Activated CD4-positive, alpha-beta T cell treated with anti-CD3 and anti-CD28 coated beads for 36 hours (primary cell): ENCODE measurements at regions of chr3 and their contacts with region 1.

Region 1: DNA sequence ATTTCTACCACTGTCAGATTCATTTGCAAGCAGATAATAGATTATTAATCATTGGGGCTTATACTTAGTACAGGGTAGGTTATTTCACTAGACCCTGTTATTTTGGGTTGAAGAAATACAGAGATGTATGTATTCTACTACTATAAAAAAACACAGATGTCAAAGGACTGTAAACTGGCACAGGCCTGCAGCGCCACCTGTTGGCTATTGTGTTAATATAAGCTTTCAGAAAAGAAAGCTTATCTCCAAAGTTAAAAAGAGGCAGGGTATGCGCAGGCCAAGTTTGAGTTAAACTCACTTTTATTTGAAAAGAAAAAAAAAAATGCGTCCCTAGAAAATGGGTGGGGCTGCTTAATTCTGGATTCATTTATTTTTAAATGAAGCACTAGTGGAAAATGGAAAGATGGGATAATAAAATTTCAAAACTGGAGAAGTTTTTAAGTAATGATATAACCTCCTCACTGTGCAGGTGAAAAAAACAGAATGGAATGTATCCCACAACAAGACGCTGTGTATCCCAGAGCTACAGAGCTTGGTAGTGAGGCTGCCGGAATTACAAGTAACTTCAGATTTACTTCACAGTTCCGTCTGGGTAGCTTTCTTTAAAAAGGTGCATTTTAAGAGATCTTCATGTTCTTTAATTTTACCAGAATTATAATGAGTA is 407.2 kb upstream of the TGFBR2 start:
- DNase-seq: peak; percentile 86
- ATAC-seq: peak; percentile 30
- H3K4me3 Mint-ChIP-seq: no peak overlapping the region
- H3K27ac Mint-ChIP-seq: no peak overlapping the region
- H3K4me1 Mint-ChIP-seq: peaks cover 2% of the 10 kb centered on the region
- H3K27me3 Mint-ChIP-seq: no peaks in the 10 kb centered on the region

Region 2: DNA sequence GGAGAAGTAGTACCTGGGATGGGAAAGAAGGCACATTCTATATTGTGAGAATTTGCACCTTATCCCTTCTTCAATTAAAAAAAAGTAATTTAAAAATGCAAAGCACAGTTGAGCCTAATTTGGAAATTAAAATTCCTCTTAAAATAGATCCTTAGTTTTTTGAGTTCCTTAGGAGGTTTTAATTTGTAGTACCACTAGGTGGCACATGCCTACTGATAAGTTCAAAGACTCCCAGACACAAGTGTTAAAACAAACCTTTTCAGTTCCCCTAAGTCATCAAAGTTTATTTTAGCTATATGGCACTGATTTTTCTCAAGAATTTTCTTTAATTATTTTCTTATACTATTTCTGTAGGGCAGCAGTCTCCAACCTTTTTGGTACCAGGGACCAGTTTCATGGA is 1723.0 kb before region 1 on chr3:
- CTCF ChIA-PET with region 1: no interaction called
- POLR2A ChIA-PET with region 1: no interaction called
- intact Hi-C with region 1: loop called in 1 of 2 experiments (anchors 10 kb)
- DNase-seq: no peak
- ATAC-seq: no peak
- H3K4me3 Mint-ChIP-seq: no peak overlapping the region
- H3K27ac Mint-ChIP-seq: no peak overlapping the region
- H3K4me1 Mint-ChIP-seq: no peaks in the 10 kb centered on the region
- H3K27me3 Mint-ChIP-seq: no peaks in the 10 kb centered on the region

Region 3: DNA sequence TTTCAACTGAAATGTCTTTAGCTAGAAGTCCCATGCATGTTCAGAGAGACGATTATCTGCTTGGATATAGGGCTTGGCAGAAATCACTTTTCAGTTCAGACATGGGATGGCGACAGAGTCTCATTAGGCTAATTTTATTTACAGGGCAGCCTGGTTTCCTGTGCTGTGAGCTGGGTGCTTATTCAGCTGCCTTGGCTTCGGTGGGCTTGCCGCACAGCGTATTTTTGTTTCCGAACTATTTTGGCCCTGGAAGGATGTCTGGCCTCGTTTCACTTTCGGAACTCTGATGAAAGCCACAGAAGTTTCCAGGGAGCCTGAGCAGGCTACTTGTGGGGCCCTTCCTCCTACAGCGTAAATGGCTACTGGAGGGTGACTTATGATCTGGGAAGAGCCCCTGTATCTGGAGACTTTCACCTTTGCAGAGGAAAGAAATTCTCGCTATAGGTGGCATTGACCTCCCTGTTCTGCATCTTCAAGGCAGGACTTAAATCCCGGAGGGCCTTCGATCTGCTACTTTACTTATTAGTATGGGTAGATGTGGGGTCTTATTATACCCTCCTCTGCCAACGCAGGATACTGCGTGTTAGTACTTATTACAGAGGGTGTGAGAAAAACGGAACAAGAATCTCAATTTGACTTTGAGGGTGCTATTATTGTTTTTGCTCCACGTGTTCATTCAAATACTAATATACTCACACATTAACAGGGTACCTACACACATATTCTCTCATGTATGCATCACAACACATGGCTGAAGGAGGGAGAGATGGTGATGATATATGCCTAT is 1282.3 kb before region 1 on chr3:
- CTCF ChIA-PET with region 1: no interaction called
- POLR2A ChIA-PET with region 1: no interaction called
- intact Hi-C with region 1: loop called in 1 of 2 experiments (anchors 10 kb)
- DNase-seq: peak; percentile 25
- ATAC-seq: peak; percentile 66
- H3K4me3 Mint-ChIP-seq: no peak overlapping the region
- H3K27ac Mint-ChIP-seq: no peak overlapping the region
- H3K4me1 Mint-ChIP-seq: peaks cover 2% of the 10 kb centered on the region
- H3K27me3 Mint-ChIP-seq: peaks cover 2% of the 10 kb centered on the region

Region 4: GRCh38 chr3:30042274-30042859 is 156.9 kb before region 1 on chr3:
- CTCF ChIA-PET with region 1: interaction called, 69 read pairs
- POLR2A ChIA-PET with region 1: no interaction called
- intact Hi-C with region 1: loop called (anchors 1 kb)
- DNase-seq: peak; percentile 75
- ATAC-seq: no peak
- H3K4me3 Mint-ChIP-seq: no peak overlapping the region
- H3K27ac Mint-ChIP-seq: no peak overlapping the region
- H3K4me1 Mint-ChIP-seq: peaks cover 3% of the 10 kb centered on the region
- H3K27me3 Mint-ChIP-seq: peaks cover 13% of the 10 kb centered on the region

Region 5: DNA sequence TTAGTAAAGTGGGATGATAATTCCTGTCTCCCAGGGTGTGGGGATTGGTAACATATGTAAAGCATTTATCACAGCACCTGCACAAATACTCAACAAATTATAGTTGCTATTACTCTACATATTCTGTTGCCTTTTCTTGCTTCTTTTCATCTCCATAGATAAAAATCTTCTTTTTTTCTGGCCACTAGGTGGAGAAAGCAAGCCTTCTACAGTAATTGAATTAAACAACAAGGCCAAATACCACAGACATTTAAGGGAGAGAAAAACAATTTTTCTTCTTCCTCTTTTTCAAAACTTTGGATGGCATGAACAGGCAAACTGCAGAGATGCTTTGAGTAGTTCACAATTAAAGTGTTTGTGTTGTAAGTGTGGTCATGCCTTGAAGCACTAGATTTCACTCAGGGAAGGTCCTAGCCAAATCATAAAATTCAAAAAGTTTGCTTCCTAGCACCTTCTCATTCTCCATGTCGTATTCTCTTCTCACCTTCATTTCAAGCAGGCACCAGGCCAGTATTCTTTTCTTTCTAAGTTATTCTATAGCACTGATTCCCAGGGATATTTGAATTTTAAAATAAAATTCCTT is 86.2 kb before region 1 on chr3:
- CTCF ChIA-PET with region 1: interaction called, 34 read pairs
- POLR2A ChIA-PET with region 1: interaction called, 3 read pairs
- intact Hi-C with region 1: loop called (anchors 1 to 2 kb)
- DNase-seq: no peak
- ATAC-seq: peak; percentile 19
- H3K4me3 Mint-ChIP-seq: no peak overlapping the region
- H3K27ac Mint-ChIP-seq: no peak overlapping the region
- H3K4me1 Mint-ChIP-seq: peaks cover 6% of the 10 kb centered on the region
- H3K27me3 Mint-ChIP-seq: no peaks in the 10 kb centered on the region

Region 6: DNA sequence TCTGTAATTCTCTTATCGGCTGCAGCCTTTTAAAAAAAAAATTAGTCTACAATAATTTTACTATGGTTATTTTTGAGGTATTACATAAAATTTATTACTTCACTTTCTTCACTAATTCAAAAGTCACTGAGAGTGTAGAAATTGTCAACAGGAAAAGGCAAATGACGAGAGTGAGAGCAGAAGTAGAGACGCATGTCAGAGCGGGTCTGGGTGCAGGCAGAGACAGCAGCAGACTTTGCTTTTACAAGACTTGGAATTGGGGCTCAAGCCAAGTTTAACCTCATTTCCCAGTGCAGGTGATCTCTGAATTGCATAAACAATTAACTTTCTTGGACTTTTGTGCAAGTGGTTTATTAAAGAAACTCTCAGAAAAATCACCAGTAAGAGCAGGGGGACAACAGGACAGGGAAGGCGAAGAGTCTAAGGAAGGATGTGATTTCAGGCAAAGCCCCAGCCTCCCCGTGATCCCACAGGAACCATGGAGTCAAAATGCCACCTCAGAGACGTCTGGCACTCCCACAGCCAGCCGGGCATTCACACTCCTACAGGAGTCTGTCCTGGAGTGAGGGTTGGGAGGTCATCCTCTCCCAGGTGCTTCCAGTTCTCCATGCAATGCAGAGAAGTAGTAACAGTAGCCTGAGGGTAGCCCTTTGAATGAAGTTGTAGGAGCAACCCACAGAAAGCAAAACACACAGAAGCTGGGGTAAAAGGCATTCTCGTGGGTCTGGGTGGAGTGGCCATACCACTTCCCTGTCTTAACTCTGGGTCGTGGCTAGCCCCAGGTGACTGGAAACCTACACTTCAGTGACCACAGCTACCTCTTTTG is 133.2 kb after region 1 on chr3:
- CTCF ChIA-PET with region 1: no interaction called
- POLR2A ChIA-PET with region 1: no interaction called
- intact Hi-C with region 1: no loop called
- DNase-seq: no peak
- ATAC-seq: peak; percentile 69
- H3K4me3 Mint-ChIP-seq: peak overlapping the region; percentile 3
- H3K27ac Mint-ChIP-seq: peak overlapping the region; percentile 79
- H3K4me1 Mint-ChIP-seq: peaks cover 29% of the 10 kb centered on the region
- H3K27me3 Mint-ChIP-seq: no peaks in the 10 kb centered on the region

Region 7: GRCh38 chr3:30693470-30694120 is 494.4 kb after region 1 on chr3:
- CTCF ChIA-PET with region 1: interaction called, 23 read pairs
- POLR2A ChIA-PET with region 1: no interaction called
- intact Hi-C with region 1: loop called in 1 of 2 experiments (anchors 5 kb)
- DNase-seq: peak; percentile 53
- ATAC-seq: peak; percentile 81
- H3K4me3 Mint-ChIP-seq: no peak overlapping the region
- H3K27ac Mint-ChIP-seq: peak overlapping the region; percentile 67
- H3K4me1 Mint-ChIP-seq: peaks cover 61% of the 10 kb centered on the region
- H3K27me3 Mint-ChIP-seq: no peaks in the 10 kb centered on the region